H1 (cell line): ENCODE measurements at regions of chr10 and their contacts with region 1.

Region 1: DNA sequence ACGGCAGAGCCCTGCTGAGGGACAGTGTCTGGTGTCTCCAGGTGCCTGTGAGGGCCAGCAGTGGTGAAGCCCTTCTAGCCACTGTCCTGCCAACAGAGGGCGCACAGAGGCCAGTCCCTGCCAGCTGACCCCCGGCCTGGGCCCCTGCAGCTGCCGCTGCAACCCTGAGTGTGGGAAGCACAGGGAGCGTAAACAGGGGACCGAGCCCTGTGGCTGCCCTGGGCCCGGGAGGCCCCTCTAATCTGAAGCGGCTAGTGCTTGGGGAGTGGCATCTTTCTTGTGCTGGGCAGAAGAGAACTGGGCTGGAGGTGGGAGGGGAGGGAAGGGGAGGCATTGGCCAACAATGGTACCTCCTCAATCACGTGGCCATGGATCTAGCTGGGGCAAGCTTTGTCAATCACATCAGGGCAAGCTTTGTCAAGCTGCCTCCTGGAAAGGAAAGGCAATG is 34.6 kb downstream of the TRIM8 start:
- DNase-seq: peak in 1 of 2 experiments; percentile 93
- H3K4me3 ChIP-seq: peak overlapping the region in 1 of 4 experiments; percentile 43; a peak in 1 of 8 replicates
- H3K27ac ChIP-seq: peak overlapping the region; percentile 46; the same call in 1 of the 2 replicates
- H3K4me1 ChIP-seq: peaks cover 23 to 44% (median 26%) of the 10 kb centered on the region in 4 experiments
- H3K27me3 ChIP-seq: no peaks in the 10 kb centered on the region
- CTCF ChIP-seq: peak; percentile 86 to 95 (median 94)
- EP300 ChIP-seq: no peak
- POLR2A ChIP-seq: peak in 1 of 2 experiments; percentile 49; a peak in 2 of 3 replicates
- RAD21 ChIP-seq: peak; percentile 67 to 77

Region 2: GRCh38 chr10:102629661-102630614 is 48.9 kb before region 1 on chr10:
- CTCF ChIA-PET with region 1: interaction called, 102 read pairs
- POLR2A ChIA-PET with region 1: interaction called, 3 read pairs
- DNase-seq: peak; percentile 60 to 73
- H3K4me3 ChIP-seq: no peak overlapping the region
- H3K27ac ChIP-seq: peak overlapping the region; percentile 71; the same call in 1 of the 2 replicates
- H3K4me1 ChIP-seq: peaks cover 26 to 68% (median 51%) of the 10 kb centered on the region in 4 experiments
- H3K27me3 ChIP-seq: no peaks in the 10 kb centered on the region
- CTCF ChIP-seq: no peak
- EP300 ChIP-seq: no peak
- POLR2A ChIP-seq: peak in 1 of 2 experiments; percentile 73; a peak in 2 of 3 replicates
- RAD21 ChIP-seq: no peak

Region 3: DNA sequence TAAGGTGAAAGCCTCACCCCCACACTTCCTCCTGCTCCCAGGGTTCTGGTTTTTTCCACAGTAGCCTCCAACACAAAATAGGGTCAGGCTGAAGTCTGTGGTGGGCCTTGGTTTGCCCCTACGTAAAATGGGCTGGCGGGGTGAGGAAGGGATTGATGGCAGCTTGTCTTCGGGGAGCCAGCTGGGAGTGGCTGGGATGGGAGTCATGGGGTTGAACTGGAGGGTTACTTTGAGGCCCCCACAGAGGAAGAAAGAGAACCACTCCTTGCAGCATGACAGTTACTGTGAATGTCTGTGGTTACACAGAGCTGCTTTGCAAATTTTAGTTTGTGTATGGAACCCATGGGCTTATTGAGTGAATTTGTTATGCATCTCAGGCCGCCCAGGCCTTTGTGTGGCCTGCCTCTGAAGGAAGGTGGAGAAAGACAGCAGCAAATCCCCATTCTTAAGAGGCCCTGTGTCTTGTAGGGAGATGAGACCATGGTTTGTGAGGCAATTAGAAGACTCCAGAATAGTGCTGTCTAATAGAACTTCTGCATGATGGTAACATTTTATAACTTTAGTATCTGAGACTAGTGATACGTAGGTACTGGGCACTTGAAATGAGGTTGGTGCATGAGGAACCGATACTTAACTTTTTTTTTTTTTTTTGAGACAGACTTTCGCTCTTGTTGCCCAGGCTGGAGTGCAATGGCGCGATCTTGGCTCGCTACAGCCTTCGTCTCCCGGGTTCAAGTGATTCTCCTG is 26.5 kb before region 1 on chr10:
- CTCF ChIA-PET with region 1: interaction called, 73 read pairs
- POLR2A ChIA-PET with region 1: interaction called, 10 read pairs
- DNase-seq: no peak
- H3K4me3 ChIP-seq: no peak overlapping the region
- H3K27ac ChIP-seq: no peak overlapping the region
- H3K4me1 ChIP-seq: peaks cover 0 to 39% (median 32%) of the 10 kb centered on the region in 4 experiments; a peak in 6 of 7 replicates
- H3K27me3 ChIP-seq: no peaks in the 10 kb centered on the region
- CTCF ChIP-seq: no peak
- EP300 ChIP-seq: no peak
- POLR2A ChIP-seq: no peak
- RAD21 ChIP-seq: no peak

Region 4: DNA sequence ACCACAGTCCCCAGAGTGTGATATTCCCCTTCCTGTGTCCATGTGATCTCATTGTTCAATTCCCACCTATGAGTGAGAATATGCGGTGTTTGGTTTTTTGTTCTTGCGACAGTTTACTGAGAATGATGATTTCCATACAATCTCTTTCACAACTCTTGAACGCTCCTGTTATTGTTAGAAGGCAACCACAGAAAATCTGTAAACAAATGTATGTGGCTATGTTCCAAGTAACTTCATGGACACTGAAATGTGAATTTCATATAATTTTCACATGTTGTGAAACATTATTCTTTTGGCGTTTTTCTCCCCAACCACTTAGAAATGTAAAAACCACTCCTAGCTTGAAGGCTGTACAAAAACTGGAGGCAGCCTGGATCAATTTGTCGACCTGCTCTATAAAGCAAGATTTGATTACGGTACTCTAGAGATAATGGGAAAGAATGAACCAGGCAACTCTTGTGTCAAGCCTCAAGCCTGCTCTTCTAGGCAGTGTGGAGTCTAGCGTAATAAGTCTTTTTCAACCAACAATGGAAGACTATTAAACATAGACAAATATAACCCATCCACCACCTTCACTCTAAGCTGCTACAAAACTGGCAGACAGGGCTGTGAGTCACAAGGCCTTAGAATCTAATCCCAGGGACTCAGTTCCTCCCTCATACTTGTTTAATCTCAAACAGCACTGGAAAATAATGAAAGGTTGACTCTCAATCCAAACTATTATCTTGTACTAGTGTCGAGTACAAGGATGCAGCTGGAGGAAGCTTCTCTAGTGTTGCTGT is 12.6 kb after region 1 on chr10:
- CTCF ChIA-PET with region 1: interaction called, 20 read pairs
- POLR2A ChIA-PET with region 1: interaction called, 7 read pairs
- DNase-seq: no peak
- H3K4me3 ChIP-seq: no peak overlapping the region
- H3K27ac ChIP-seq: no peak overlapping the region
- H3K4me1 ChIP-seq: no peaks in the 10 kb centered on the region
- H3K27me3 ChIP-seq: no peaks in the 10 kb centered on the region
- CTCF ChIP-seq: no peak
- EP300 ChIP-seq: no peak
- POLR2A ChIP-seq: no peak
- RAD21 ChIP-seq: no peak

Region 5: GRCh38 chr10:102796407-102797176 is 117.7 kb after region 1 on chr10:
- CTCF ChIA-PET with region 1: no interaction called
- POLR2A ChIA-PET with region 1: no interaction called
- DNase-seq: no peak
- H3K4me3 ChIP-seq: no peak overlapping the region
- H3K27ac ChIP-seq: no peak overlapping the region
- H3K4me1 ChIP-seq: peaks cover 13 to 22% (median 18%) of the 10 kb centered on the region in 4 experiments
- H3K27me3 ChIP-seq: no peaks in the 10 kb centered on the region
- CTCF ChIP-seq: no peak
- EP300 ChIP-seq: no peak
- POLR2A ChIP-seq: no peak
- RAD21 ChIP-seq: no peak

Region 6: GRCh38 chr10:102876747-102877153 is 197.9 kb after region 1 on chr10:
- CTCF ChIA-PET with region 1: no interaction called
- POLR2A ChIA-PET with region 1: no interaction called
- DNase-seq: no peak
- H3K4me3 ChIP-seq: no peak overlapping the region
- H3K27ac ChIP-seq: no peak overlapping the region
- H3K4me1 ChIP-seq: no peaks in the 10 kb centered on the region
- H3K27me3 ChIP-seq: no peaks in the 10 kb centered on the region
- CTCF ChIP-seq: no peak
- EP300 ChIP-seq: no peak
- POLR2A ChIP-seq: no peak
- RAD21 ChIP-seq: no peak

Region 7: GRCh38 chr10:102888048-102888447 is 209.2 kb after region 1 on chr10:
- CTCF ChIA-PET with region 1: no interaction called
- POLR2A ChIA-PET with region 1: no interaction called
- DNase-seq: no peak
- H3K4me3 ChIP-seq: no peak overlapping the region
- H3K27ac ChIP-seq: no peak overlapping the region
- H3K4me1 ChIP-seq: no peaks in the 10 kb centered on the region
- H3K27me3 ChIP-seq: no peaks in the 10 kb centered on the region
- CTCF ChIP-seq: no peak
- EP300 ChIP-seq: no peak
- POLR2A ChIP-seq: no peak
- RAD21 ChIP-seq: no peak